OCI-LY7 (cell line): ENCODE measurements at regions of chr14 and their contacts with region 1.

Region 1: GRCh38 chr14:81474148-81474492 is 59.5 kb downstream of the SEL1L start:
- DNase-seq: peak; percentile 55
- H3K4me3 ChIP-seq: peak overlapping the region; percentile 27
- H3K27ac ChIP-seq: peak overlapping the region; percentile 97
- H3K4me1 ChIP-seq: peaks cover 80% of the 10 kb centered on the region
- CTCF ChIP-seq: no peak

Region 2: GRCh38 chr14:80930836-80931389 is 543.2 kb before region 1 on chr14:
- CTCF ChIA-PET with region 1: no interaction called
- POLR2A ChIA-PET with region 1: no interaction called
- intact Hi-C with region 1: loop called (anchors 1 kb)
- DNase-seq: peak; percentile 94
- H3K4me3 ChIP-seq: peak overlapping the region; percentile 42
- H3K27ac ChIP-seq: peak overlapping the region; percentile 97
- H3K4me1 ChIP-seq: peaks cover 80% of the 10 kb centered on the region
- CTCF ChIP-seq: no peak

Region 3: GRCh38 chr14:80973931-80974641 is 500.0 kb before region 1 on chr14:
- CTCF ChIA-PET with region 1: no interaction called
- POLR2A ChIA-PET with region 1: interaction called, 3 read pairs
- intact Hi-C with region 1: loop called (anchors 5 kb)
- DNase-seq: no peak
- H3K4me3 ChIP-seq: no peak overlapping the region
- H3K27ac ChIP-seq: no peak overlapping the region
- H3K4me1 ChIP-seq: peaks cover 53% of the 10 kb centered on the region
- CTCF ChIP-seq: no peak

Region 4: DNA sequence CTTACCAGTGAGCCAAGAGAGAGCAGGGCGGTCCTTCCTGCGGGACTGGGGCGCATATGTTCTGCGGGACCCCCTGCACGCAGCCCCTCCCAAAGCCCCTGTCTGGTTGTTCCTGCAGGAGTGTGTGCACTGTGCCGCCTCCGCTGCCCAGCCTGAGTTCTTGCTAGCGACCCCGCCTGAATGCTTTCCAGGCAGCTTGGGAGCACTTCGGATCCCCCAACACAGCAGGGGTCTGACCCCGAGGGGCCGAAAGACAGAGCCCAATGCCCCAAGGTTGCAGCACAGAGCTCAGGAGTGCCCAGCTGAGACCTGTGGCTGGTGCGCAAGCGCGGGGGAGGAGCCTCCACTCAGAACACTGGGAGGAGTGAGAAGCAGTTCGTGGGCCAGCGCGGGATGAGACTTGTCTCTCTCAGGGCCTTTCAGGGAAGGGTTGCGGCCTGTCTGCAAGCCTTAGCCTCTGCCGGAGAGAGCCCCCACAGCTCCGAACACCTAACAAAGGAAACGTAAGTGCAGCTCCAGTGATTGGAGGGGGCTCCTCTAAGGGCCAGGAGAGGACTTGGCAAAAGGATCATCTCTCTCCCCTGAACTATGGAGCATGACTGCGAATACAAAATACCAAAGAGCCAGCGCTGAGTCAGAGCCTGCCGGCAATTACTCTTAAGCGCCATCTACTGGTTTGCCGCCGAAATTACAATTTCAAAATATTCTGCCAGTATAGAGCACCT is 303.9 kb before region 1 on chr14:
- CTCF ChIA-PET with region 1: no interaction called
- POLR2A ChIA-PET with region 1: no interaction called
- intact Hi-C with region 1: loop called (anchors 5 kb)
- DNase-seq: peak; percentile 87
- H3K4me3 ChIP-seq: peak overlapping the region; percentile 62
- H3K27ac ChIP-seq: peak overlapping the region; percentile 62
- H3K4me1 ChIP-seq: peaks cover 46% of the 10 kb centered on the region
- CTCF ChIP-seq: peak; percentile 97

Region 5: DNA sequence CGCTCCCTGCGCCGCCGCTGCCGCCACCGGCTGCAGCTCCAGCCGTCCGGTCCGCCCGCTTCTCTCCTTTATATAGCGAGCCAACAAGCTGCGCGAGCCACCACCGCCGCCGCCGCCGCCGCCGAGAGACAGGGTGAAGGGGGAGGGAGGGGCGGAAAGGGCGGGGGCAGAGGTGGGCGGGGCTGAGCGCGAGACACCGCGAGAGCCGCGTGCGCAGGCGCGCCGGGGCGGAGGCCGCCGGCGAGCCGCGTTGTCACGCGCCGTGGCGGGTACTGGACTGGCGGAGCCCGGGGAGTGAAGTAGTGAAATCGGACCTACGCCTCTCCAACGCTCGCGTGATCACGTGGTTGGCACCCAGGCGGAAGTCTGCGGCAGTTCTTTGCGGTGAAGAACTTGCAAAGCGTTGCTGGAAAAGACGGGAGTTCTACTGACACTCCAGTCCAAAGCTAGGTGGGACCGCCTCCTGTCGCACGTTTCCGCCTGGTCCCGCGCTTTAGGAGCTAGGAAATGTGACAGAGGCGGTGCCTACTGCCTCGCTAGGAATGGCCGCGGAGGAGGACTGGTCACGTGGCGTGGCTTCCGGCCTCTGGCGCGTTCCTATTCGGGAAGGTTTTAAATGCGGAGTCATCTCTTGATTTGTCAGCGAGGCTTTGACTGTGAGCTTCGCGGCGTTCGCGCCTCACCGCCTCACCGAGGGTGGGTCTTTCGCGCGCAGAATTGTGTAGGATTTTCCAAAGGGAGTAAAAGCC is 253.1 kb before region 1 on chr14 and contains the start of gene GTF2A1:
- CTCF ChIA-PET with region 1: no interaction called
- POLR2A ChIA-PET with region 1: interaction called, 11 read pairs
- intact Hi-C with region 1: loop called (anchors 1 kb)
- DNase-seq: peak; percentile 97
- H3K4me3 ChIP-seq: peak within 1 kb of the TSS; percentile 92
- H3K27ac ChIP-seq: peak within 1 kb of the TSS; percentile 93
- H3K4me1 ChIP-seq: peaks cover 34% of the 10 kb centered on the region
- CTCF ChIP-seq: no peak
- total RNA-seq, gene GTF2A1: 32.5 and 35.1 TPM in 2 replicates

Region 6: GRCh38 chr14:81371802-81372201 is 102.3 kb before region 1 on chr14:
- CTCF ChIA-PET with region 1: no interaction called
- POLR2A ChIA-PET with region 1: no interaction called
- intact Hi-C with region 1: no loop called
- DNase-seq: no peak
- H3K4me3 ChIP-seq: no peak overlapping the region
- H3K27ac ChIP-seq: no peak overlapping the region
- H3K4me1 ChIP-seq: no peaks in the 10 kb centered on the region
- CTCF ChIP-seq: no peak

Region 7: GRCh38 chr14:81485372-81485771 is 11.3 kb after region 1 on chr14:
- CTCF ChIA-PET with region 1: no interaction called
- POLR2A ChIA-PET with region 1: interaction called, 22 read pairs
- intact Hi-C with region 1: no loop called
- DNase-seq: no peak
- H3K4me3 ChIP-seq: no peak overlapping the region
- H3K27ac ChIP-seq: no peak overlapping the region
- H3K4me1 ChIP-seq: no peaks in the 10 kb centered on the region
- CTCF ChIP-seq: no peak

Region 8: GRCh38 chr14:81533536-81534343 is 59.6 kb after region 1 on chr14 and contains the start of gene SEL1L:
- CTCF ChIA-PET with region 1: interaction called, 12 read pairs
- POLR2A ChIA-PET with region 1: interaction called, 108 read pairs
- intact Hi-C with region 1: loop called (anchors 1 kb)
- DNase-seq: peak; percentile 100
- H3K4me3 ChIP-seq: peak within 1 kb of the TSS; percentile 84
- H3K27ac ChIP-seq: no peak within 1 kb of the TSS
- H3K4me1 ChIP-seq: peaks cover 48% of the 10 kb centered on the region
- CTCF ChIP-seq: no peak
- total RNA-seq, gene SEL1L: 58.3 and 68.8 TPM in 2 replicates